Sciatic nerve (tissue), 2 donors: ENCODE measurements at regions of chr1 and their contacts with region 1.

Region 1: GRCh38 chr1:201709564-201710295 is 119.2 kb upstream of the IPO9 start:
- DNase-seq: peak; percentile 86
- ATAC-seq: peak; percentile 63

Region 2: DNA sequence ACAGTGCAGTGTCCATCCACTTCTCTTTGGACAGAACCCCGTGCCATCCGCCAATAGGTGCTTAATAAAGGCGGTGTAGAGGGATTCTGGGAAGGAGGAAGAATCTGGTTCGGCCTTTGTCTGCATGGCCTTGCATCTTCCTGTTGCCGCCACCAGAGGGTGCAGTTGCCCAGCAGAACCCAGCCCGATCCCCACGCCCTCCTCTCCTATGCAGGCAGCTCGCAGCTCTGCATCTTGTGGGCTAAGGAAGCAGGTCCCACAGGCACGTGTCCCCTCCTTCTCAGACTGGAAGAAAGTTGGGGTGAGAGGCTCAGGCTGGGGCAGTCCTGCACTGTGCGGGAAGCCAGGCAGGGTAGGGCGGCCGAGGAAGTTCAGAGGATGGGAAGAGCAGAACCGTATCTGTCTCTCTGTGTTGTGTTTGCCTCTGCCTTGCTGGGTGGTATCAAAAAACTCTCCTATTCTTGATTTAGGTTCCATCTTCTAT is 150.0 kb before region 1 on chr1:
- intact Hi-C with region 1: loop called (anchors 5 kb)
- DNase-seq: peak; percentile 90
- ATAC-seq: peak; percentile 90

Region 3: GRCh38 chr1:201877877-201878401 is 168.2 kb after region 1 on chr1:
- intact Hi-C with region 1: no loop called
- DNase-seq: no peak
- ATAC-seq: peak; percentile 62

Region 4: DNA sequence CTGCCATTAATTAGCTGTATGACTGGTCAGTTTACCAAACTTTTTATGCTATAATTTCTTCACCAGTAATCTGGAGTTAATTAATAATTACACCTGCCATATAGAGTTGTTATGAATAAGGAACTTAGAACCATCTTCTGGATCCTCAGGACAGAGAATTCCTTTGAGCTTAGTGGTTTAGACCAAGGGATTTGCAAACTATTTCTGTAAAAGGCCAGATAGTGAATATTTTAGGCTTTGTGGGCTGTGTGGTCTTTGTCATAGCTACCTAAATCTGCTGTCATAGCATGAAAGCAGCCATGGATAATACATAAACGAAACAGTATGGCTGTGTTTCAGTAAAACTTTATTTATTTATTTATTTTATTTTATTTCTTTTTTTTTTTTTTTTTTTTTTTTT is 254.5 kb after region 1 on chr1:
- intact Hi-C with region 1: no loop called
- DNase-seq: no peak
- ATAC-seq: no peak

Region 5: GRCh38 chr1:202671122-202671797 is 961.5 kb after region 1 on chr1:
- intact Hi-C with region 1: no loop called
- DNase-seq: no peak
- ATAC-seq: no peak